ENCODE measurements at regions of chr19 and their contacts with region 1.

Region 1: DNA sequence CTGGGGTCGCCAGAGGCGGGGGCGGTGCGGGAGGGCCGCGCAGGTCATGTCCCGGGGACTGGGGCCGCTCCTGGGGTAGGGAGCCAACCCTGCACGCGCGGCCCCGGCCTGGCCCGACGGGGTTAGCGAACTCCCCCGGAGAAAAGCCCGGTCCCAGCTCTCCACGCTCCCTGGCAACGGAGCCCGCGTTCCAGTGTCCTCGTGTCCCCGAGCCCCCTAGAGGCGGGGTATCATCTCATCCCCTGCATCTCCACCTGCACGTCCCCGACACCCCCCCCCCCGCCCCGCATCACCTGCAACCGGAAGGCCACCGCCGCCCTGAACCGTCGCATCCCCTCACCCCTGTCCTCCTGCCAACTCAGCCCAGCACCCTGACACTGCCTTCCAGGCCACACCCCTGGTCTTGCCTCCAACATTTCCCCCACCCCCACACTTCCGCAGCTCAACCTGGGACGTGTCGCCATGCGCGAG is 2.7 kb downstream of the WDR88 start:
- DNase-seq: no peak
- H3K4me3 ChIP-seq: no peak overlapping the region
- H3K27ac ChIP-seq: no peak overlapping the region
- H3K4me1 ChIP-seq: no peaks in the 10 kb centered on the region
- H3K27me3 ChIP-seq: no peaks in the 10 kb centered on the region
- CTCF ChIP-seq: no peak

Region 2: DNA sequence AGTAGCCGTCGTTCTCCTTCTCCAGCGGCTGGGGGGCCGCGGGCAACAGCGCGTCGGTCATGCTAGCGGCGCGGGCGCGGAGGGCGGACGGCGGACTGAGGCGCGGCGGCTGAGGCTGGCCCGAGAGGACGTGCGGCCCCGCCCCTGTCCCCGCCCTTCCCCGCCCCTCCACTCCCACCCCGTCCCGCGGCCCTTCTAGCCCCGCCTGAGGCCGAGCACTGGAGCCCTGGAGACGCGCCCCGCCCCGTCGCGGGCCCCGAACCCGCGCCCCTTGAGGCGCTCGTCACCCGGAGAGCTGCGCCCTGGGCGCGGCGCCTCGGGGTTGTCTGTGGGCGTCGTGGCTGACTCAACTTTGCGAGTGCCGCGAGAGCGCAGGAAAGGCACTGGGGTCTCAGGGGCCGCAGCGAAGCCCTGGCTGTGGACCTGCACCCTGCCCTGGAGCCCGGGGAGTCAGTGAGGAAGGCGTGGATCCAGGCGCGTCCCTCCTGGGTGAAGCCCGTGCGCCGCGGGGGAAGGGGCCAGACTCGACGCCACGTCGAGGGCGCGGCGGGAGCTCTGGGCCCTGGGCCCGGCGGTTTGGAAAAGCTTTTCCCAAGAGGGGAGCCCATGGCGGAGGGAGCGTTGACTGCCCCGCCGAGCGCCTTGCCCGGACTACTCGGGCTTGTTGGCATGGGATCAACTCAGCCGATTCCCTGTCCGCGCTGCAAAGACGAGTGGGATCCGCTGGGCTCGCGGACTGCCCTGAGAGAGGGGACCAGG is 69.6 kb before region 1 on chr19 and contains the start of gene RHPN2:
- CTCF ChIA-PET with region 1: no interaction called
- POLR2A ChIA-PET with region 1: no interaction called
- intact Hi-C with region 1: no loop called
- DNase-seq: peak; percentile 47 to 77
- H3K4me3 ChIP-seq: peak within 1 kb of the TSS; percentile 99
- H3K27ac ChIP-seq: 0 out of 2 replicates have a peak within 1 kb of the TSS, but pooled peaks have one; percentile 4
- H3K4me1 ChIP-seq: peaks cover 36% of the 10 kb centered on the region
- H3K27me3 ChIP-seq: no peaks in the 10 kb centered on the region
- CTCF ChIP-seq: no peak
- total RNA-seq, gene RHPN2: 21.3 and 28.5 TPM in 2 replicates

Region 3: GRCh38 chr19:33085570-33086128 is 49.0 kb before region 1 on chr19:
- CTCF ChIA-PET with region 1: no interaction called
- POLR2A ChIA-PET with region 1: no interaction called
- intact Hi-C with region 1: no loop called
- DNase-seq: no peak
- H3K4me3 ChIP-seq: no peak overlapping the region
- H3K27ac ChIP-seq: no peak overlapping the region
- H3K4me1 ChIP-seq: peaks cover 11% of the 10 kb centered on the region
- H3K27me3 ChIP-seq: no peaks in the 10 kb centered on the region
- CTCF ChIP-seq: no peak

Region 4: GRCh38 chr19:33161201-33161600 is 26.6 kb after region 1 on chr19:
- CTCF ChIA-PET with region 1: no interaction called
- POLR2A ChIA-PET with region 1: no interaction called
- intact Hi-C with region 1: no loop called
- DNase-seq: no peak
- H3K4me3 ChIP-seq: no peak overlapping the region
- H3K27ac ChIP-seq: no peak overlapping the region
- H3K4me1 ChIP-seq: no peaks in the 10 kb centered on the region
- H3K27me3 ChIP-seq: no peaks in the 10 kb centered on the region
- CTCF ChIP-seq: no peak

Region 5: GRCh38 chr19:33486936-33487811 is 352.6 kb after region 1 on chr19:
- CTCF ChIA-PET with region 1: no interaction called
- POLR2A ChIA-PET with region 1: interaction called, 18 read pairs
- intact Hi-C with region 1: no loop called
- DNase-seq: no peak
- H3K4me3 ChIP-seq: no peak overlapping the region
- H3K27ac ChIP-seq: no peak overlapping the region
- H3K4me1 ChIP-seq: no peaks in the 10 kb centered on the region
- H3K27me3 ChIP-seq: no peaks in the 10 kb centered on the region
- CTCF ChIP-seq: no peak